ENCODE measurements at regions of chr1 and their contacts with region 1.

Region 1: GRCh38 chr1:46179138-46180081 is 3.1 kb upstream of the P3R3URF start:
- DNase-seq: peak; percentile 52 to 89 (median 83)
- H3K4me3 ChIP-seq: peak overlapping the region in 14 of 59 donors; percentile 0 to 34 (median 17)
- H3K27ac ChIP-seq: peak overlapping the region in 5 of 59 donors; percentile 2 to 60 (median 11)
- H3K27me3 ChIP-seq: no peaks in the 10 kb centered on the region
- CTCF ChIP-seq: peak; percentile 70 to 97 (median 92)

Region 2: GRCh38 chr1:46036894-46037839 is 142.2 kb before region 1 on chr1:
- intact Hi-C with region 1: loop called (anchors 1 kb)
- DNase-seq: peak; percentile 79 to 93 (median 90)
- H3K4me3 ChIP-seq: no peak overlapping the region
- H3K27ac ChIP-seq: peak overlapping the region in 13 of 59 donors; percentile 2 to 62 (median 30)
- H3K27me3 ChIP-seq: no peaks in the 10 kb centered on the region
- CTCF ChIP-seq: peak; percentile 94 to 100 (median 99)

Region 3: DNA sequence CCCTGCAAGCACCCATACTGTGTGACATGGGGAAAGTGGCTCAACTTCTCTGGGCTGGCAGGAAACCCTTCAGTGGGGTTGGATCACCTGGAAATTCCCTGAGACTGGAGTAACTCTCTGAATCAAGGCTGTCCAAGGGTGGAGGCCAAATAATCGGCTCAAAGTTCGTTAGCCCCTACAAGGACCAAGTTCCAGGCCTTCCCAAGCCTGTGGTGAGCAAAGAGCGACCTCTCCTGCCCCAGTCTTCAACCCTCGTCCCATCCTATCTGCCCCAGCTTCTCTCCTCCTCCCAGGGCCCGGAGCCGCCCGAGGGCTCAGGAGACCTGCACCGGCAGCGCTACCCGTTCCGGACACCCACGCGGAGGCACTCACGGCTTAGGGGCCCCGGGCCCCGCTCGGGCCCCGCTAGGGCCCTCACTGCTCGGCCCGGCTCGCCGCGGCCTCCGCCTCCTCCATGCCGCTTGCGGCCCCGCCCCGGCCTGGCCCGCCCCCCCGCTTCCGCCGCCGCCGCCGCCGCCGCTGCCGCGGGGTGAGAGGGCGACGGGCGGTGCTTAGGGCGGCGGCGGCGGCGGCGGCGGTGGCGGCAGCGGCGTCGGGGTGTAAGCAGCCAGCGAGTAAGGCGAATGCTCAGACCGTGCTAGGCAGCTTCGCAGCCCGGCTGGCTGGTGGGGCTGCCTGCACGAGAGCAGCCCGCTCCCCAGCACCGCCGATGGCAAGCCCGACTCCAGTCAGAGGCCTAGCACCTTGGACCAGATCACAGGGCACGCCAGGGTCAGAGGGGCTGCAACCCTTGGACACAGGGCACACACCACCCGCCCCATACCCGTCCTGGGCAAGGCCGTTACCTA is 18.8 kb after region 1 on chr1 and contains the start of gene POMGNT1:
- intact Hi-C with region 1: loop called in 1 of 2 experiments (anchors 2 kb)
- DNase-seq: peak in 6 of 10 donors; percentile 39 to 86 (median 65)
- H3K4me3 ChIP-seq: peak within 1 kb of the TSS; percentile 64 to 92 (median 85)
- H3K27ac ChIP-seq: peak within 1 kb of the TSS; percentile 58 to 98 (median 90)
- H3K27me3 ChIP-seq: no peaks in the 10 kb centered on the region
- CTCF ChIP-seq: peak in 8 of 56 donors; percentile 8 to 28 (median 18)
- total RNA-seq, gene POMGNT1: 58.7 to 145 (median 92.1) TPM